ENCODE measurements at regions of chr17 and their contacts with region 1.

Region 1: DNA sequence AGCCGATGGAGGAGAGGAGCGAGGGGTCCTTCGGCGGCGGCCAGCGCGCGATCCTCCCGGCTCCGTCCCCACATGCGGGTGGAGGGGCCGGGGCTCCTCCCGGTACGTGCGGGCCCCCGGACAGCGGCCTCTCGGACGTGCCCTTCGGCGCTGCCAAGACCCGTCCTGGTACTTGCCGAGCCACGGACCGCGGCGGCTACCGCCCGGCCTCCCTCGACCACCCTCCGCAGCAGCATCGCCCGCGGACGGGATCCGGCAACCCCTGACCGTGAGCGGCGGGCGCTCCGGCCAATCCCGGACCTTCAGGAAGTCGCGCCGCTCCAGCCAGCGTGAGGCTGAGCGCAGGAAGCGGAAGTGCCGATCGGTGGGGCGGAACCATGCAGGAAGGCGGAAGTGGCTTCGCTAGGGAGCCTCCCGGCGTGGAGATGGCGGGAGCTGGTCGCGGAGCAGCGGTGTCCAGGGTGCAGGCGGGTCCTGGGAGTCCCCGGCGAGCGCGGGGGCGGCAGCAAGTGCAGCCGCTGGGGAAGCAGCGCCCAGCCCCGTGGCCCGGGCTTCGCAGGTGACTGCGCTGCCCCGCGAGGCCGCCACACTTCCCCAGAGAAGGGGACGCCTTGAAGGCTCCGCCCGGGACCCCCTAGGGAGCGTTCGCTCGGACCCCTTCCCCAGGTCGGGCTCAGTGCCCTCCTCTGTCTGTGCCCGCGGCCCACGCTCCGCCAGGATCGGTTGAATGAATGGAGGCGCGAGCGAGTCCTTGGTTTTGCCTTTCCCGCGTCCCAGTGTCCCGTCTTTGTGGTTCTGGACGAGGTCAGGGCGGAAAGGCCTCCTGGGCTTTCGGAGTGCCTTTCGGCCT is at the starts of genes CCDC137 and OXLD1:
- DNase-seq: peak; percentile 93 to 98 (median 96)
- H3K4me3 ChIP-seq: peak within 1 kb of the TSS; percentile 65 to 100 (median 96)
- H3K27ac ChIP-seq: peak within 1 kb of the TSS in 57 of 59 donors; percentile 5 to 92 (median 82)
- H3K27me3 ChIP-seq: no peaks in the 10 kb centered on the region
- CTCF ChIP-seq: peak in 17 of 56 donors; percentile 9 to 43 (median 24)
- total RNA-seq, gene CCDC137: 9.0 to 20.1 (median 13.5) TPM
- total RNA-seq, gene OXLD1: 14.1 to 35.0 (median 24.3) TPM

Region 2: GRCh38 chr17:81636505-81637288 is 29.9 kb before region 1 on chr17 and contains the starts of genes NPLOC4 and TSPAN10:
- intact Hi-C with region 1: loop called in 1 of 2 experiments (anchors 2 kb)
- DNase-seq: peak; percentile 64 to 87 (median 76)
- H3K4me3 ChIP-seq: peak within 1 kb of the TSS; percentile 71 to 99 (median 95)
- H3K27ac ChIP-seq: peak within 1 kb of the TSS; percentile 75 to 98 (median 92)
- H3K27me3 ChIP-seq: no peaks in the 10 kb centered on the region
- CTCF ChIP-seq: peak in 18 of 56 donors; percentile 6 to 63 (median 25)
- total RNA-seq, gene NPLOC4: 67.3 to 117 (median 92.7) TPM
- total RNA-seq, gene TSPAN10: 0.20 to 2.8 (median 0.77) TPM in 113 of 120 experiments, not detected in the others

Region 3: DNA sequence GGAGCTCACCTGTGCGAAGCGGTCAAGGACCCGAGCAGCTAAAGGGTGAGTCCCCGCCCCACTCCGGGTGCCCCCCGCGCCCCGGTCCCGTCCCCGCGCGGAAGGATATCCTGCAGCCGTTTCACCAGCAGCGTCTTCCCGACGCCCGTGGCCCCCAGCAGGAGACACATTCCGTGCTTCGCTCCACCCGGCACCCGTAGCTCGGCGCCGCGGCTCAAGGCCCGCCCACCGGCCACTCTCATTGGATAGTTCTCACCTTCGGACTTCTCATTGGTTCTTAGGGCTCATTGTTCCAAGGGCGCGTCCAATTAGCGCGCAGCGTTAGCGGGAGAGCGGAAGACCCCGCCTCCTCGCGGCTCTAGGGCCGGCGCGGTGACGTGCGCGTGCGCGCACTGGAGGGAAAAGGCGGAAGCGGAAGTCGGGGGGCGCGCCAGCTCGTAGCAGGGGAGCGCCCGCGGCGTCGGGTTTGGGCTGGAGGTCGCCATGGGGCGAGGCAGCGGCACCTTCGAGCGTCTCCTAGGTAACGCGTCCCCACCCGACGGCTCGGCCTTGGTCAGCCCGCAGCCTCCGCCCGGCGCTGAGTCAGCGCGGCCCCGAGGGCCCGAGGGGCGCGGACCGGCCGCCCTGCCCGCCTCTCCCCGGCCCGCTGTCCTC is 17.1 kb after region 1 on chr17 and contains the starts of genes ARL16 and HGS:
- intact Hi-C with region 1: loop called in 1 of 2 experiments (anchors 2 kb)
- DNase-seq: peak; percentile 95 to 99 (median 97)
- H3K4me3 ChIP-seq: peak within 1 kb of the TSS; percentile 63 to 100 (median 99)
- H3K27ac ChIP-seq: peak within 1 kb of the TSS in 58 of 59 donors; percentile 11 to 95 (median 84)
- H3K27me3 ChIP-seq: no peaks in the 10 kb centered on the region
- CTCF ChIP-seq: peak in 32 of 56 donors; percentile 7 to 57 (median 26)
- total RNA-seq, gene ARL16: 20.4 to 50.6 (median 36.9) TPM
- total RNA-seq, gene HGS: 84.6 to 142 (median 106) TPM